ENCODE measurements at regions of chr3 and their contacts with region 1.

Region 1: GRCh38 chr3:72665701-72666443 is 182.4 kb downstream of the SHQ1 start:
- DNase-seq: peak in 20 of 42 donors; percentile 13 to 81 (median 36)

Region 2: GRCh38 chr3:72768006-72768441 is 102.2 kb after region 1 on chr3:
- intact Hi-C with region 1: no loop called
- DNase-seq: peak in 6 of 42 donors; percentile 8 to 22 (median 12)

Region 3: DNA sequence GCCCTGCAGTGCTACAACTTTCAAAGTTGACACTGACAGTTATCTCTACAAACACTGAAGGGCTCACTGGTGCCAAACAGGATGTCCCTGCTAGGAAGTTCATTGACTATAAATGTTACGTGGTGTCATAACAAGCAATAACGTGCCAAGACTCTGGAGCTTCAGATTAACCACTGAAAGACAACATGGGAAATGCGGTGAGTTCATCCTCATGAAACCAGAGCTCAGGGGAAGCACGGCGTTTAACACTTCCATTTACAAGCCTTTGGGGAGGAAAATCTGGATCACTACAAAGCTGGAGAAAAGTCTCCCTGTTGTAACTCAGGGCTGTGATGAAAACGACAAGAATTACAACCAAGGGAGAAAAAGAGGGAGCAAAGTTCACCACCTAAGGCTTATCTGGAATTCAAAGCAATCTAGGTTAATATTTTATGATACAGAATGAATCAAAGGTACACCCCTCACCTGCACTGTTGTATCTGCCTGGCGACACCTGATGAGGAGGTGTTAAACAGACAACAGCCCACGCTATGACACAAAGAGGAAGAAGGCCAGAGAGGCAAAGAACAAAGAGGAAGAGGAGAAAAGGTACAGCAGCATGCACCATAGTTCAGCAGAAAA is 155.4 kb after region 1 on chr3:
- intact Hi-C with region 1: loop called (anchors 5 kb)
- DNase-seq: no peak

Measured in head of caudate nucleus (tissue), 42 donors.